ENCODE measurements at regions of chr2 and their contacts with region 1.

Region 1: GRCh38 chr2:25131567-25132298 is 36.6 kb downstream of the POMC start:
- DNase-seq: no peak
- ATAC-seq: no peak
- H3K4me3 ChIP-seq: peak overlapping the region; percentile 9 to 38 (median 29)
- H3K27ac ChIP-seq: no peak overlapping the region
- H3K4me1 ChIP-seq: no peaks in the 10 kb centered on the region
- H3K27me3 ChIP-seq: no peaks in the 10 kb centered on the region
- CTCF ChIP-seq: no peak
- POLR2A ChIP-seq: no peak

Region 2: GRCh38 chr2:24977631-24978030 is 154.1 kb before region 1 on chr2:
- in situ Hi-C with region 1: loop called (anchors 5 kb)
- intact Hi-C with region 1: loop called (anchors 1 kb)
- DNase-seq: no peak
- ATAC-seq: no peak
- H3K4me3 ChIP-seq: no peak overlapping the region
- H3K27ac ChIP-seq: no peak overlapping the region
- H3K4me1 ChIP-seq: peaks cover 9 to 16% of the 10 kb centered on the region in 2 donors
- H3K27me3 ChIP-seq: no peaks in the 10 kb centered on the region
- CTCF ChIP-seq: no peak
- POLR2A ChIP-seq: no peak

Region 3: DNA sequence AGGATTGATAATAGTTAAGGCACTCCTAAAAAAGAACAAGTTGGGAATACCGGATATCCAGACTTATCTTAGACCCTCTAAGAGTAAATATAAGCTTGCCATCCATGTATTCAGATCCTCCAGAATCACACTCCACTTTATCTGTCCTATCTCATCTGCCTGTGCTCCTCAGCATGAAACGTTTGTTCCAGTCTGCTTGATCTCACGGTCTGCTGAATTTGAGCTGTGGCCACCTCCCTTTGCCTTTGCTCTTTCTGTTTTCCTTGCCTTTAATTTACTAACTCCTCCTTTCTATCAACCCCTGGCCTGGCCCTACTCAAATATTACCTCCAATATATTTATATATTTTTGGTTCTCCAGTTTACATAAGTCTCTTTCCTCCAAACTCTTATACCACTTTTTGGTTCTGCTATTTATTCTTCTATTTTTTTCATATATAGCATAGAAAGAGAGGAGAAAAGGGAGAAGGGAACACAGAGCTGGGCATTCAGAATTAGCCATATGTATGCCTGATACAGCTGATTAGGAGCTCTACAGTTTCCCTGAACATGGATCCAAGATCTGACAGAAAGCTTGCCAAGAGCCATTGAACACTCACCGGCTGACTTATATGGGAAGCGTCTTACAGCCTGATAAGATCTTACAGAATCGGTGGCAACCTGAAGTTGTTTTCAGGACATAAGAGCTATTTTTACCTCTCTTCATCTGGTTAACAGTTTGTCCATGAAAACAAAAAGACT is 138.2 kb before region 1 on chr2:
- in situ Hi-C with region 1: no loop called
- intact Hi-C with region 1: no loop called
- DNase-seq: no peak
- ATAC-seq: no peak
- H3K4me3 ChIP-seq: no peak overlapping the region
- H3K27ac ChIP-seq: no peak overlapping the region
- H3K4me1 ChIP-seq: peaks cover 14 to 17% of the 10 kb centered on the region in 2 donors
- H3K27me3 ChIP-seq: no peaks in the 10 kb centered on the region
- CTCF ChIP-seq: no peak
- POLR2A ChIP-seq: no peak

Region 4: GRCh38 chr2:25030702-25031101 is 101.0 kb before region 1 on chr2:
- in situ Hi-C with region 1: no loop called
- intact Hi-C with region 1: no loop called
- DNase-seq: no peak
- ATAC-seq: no peak
- H3K4me3 ChIP-seq: no peak overlapping the region
- H3K27ac ChIP-seq: no peak overlapping the region
- H3K4me1 ChIP-seq: peaks cover 25 to 27% of the 10 kb centered on the region in 2 donors
- H3K27me3 ChIP-seq: no peaks in the 10 kb centered on the region
- CTCF ChIP-seq: no peak
- POLR2A ChIP-seq: no peak

Region 5: DNA sequence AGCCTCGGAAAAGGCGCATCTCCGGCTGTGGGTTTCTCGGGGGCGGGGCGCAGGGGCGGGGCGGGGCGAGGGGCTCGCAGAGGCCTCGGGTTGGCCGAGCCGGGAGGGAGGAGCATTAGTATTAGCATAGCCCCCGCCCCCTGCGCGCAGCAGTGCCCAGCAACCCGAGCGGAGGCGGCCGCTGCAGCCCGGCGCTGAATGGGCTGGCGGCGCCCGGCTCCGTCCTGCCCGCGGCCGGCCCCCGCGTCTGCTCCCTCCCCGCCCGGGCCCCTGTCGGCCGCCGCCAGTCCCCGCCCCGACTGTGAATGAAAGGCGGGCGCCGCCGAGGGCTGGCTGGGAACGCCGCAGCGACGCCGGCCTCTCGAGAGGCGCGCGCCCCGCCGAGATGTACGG is 89.8 kb before region 1 on chr2 and contains the start of gene EFR3B:
- in situ Hi-C with region 1: no loop called
- intact Hi-C with region 1: loop called (anchors 2 kb)
- DNase-seq: peak; percentile 93 to 94
- ATAC-seq: peak; percentile 86 to 88
- H3K4me3 ChIP-seq: peak within 1 kb of the TSS; percentile 60 to 98 (median 66)
- H3K27ac ChIP-seq: peak within 1 kb of the TSS; percentile 69 to 87 (median 76)
- H3K4me1 ChIP-seq: peaks cover 15 to 22% of the 10 kb centered on the region in 2 donors
- H3K27me3 ChIP-seq: no peaks in the 10 kb centered on the region
- CTCF ChIP-seq: peak in 2 of 5 experiments; percentile 24 to 25
- POLR2A ChIP-seq: peak; percentile 54 to 77
- total RNA-seq, gene EFR3B: 0.29 to 1.4 (median 0.67) TPM

Region 6: DNA sequence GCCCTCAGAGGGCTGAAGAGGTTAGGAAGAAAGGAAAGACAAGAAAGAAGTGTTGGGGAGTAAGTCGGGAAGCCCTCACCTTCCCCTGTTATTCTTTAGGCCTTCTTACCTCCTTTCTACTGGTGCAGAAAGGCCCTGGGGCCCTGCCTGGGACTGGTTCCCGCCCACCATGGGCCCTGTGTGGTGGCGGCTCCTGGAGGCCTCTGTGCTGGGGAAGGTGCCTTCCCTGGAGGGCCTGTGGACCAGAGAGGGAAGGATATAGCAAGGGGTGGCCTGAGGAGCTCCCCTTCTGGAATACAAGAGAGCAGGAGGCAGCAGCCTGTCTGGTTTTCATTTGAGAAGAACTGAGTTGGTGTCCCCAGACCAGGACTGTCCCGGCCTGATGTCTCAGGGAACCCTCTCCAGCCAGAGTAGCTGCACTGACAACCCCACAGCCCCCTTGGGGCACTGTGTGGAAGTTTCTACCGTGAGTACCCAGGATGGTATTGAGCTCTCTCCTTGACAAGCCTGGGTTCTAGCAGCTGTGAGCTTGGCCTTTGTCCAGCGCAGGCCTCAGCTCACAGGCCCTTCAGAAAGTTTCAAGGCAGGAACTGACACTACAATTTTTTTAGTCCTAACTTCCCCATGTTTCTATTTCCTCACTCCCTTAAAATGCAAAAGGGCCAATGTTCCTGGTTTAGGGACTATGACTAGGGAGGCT is 42.8 kb before region 1 on chr2:
- in situ Hi-C with region 1: no loop called
- intact Hi-C with region 1: no loop called
- DNase-seq: no peak
- ATAC-seq: no peak
- H3K4me3 ChIP-seq: no peak overlapping the region
- H3K27ac ChIP-seq: no peak overlapping the region
- H3K4me1 ChIP-seq: no peaks in the 10 kb centered on the region
- H3K27me3 ChIP-seq: no peaks in the 10 kb centered on the region
- CTCF ChIP-seq: no peak
- POLR2A ChIP-seq: no peak

Measured in gastrocnemius medialis (tissue), 4 donors.